CD8-positive, alpha-beta memory T cell (primary cell): ENCODE measurements at regions of chr10 and their contacts with region 1.

Region 1: DNA sequence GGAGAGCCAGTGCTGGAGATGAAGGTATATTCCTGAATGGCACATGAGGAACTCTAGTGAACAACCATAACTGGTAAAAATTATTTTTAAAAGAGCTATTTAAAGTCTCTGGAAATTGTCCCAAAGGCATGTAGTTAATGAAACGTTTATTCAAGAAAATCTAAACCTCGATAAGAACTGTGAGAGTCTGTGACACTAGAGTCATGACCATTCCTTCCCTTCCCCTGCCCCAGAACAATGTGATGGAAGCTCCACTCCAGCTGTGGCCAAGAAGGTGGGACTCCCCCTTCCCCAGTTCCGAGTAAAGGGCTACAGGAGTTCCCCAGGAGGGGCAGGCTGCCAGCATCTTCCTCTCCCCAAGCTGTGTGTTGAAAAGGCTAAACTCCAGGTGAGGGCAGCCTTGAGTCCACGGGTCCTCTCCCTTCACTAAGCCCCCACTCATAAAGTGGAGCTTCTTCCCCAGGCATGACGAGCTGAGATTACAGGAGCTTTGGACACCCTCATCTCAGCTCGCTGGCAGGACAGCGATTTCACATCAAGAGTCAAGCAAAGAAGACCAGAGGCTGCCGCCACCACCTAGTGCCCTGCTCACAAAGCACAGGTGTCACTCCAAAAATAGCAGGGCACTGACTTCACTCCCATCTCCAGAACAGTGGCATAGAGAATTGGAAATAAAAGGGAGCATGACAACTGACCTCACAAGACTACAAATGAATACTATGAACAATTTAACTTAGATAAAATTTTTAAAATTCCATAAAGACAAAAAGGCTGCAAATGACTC is 68.5 kb downstream of the NHLRC2 start:
- DNase-seq: no peak
- H3K4me3 ChIP-seq: no peak overlapping the region
- H3K4me3 Mint-ChIP-seq: no peak overlapping the region
- H3K27ac ChIP-seq: no peak overlapping the region
- H3K27ac Mint-ChIP-seq: no peak overlapping the region
- H3K4me1 ChIP-seq: no peaks in the 10 kb centered on the region
- H3K4me1 Mint-ChIP-seq: no peaks in the 10 kb centered on the region
- H3K27me3 ChIP-seq: no peaks in the 10 kb centered on the region
- H3K27me3 Mint-ChIP-seq: peaks cover 11 to 28% of the 10 kb centered on the region in 2 donors

Region 2: GRCh38 chr10:114541081-114541796 is 618.3 kb after region 1 on chr10:
- CTCF ChIA-PET with region 1: no interaction called
- POLR2A ChIA-PET with region 1: interaction called, 12 read pairs
- DNase-seq: peak; percentile 54 to 92 (median 91)
- H3K4me3 ChIP-seq: peak overlapping the region; percentile 33
- H3K4me3 Mint-ChIP-seq: peak overlapping the region; percentile 50 to 89 (median 75)
- H3K27ac ChIP-seq: peak overlapping the region; percentile 82
- H3K27ac Mint-ChIP-seq: peak overlapping the region; percentile 97 to 100 (median 99)
- H3K4me1 ChIP-seq: peaks cover 96% of the 10 kb centered on the region
- H3K4me1 Mint-ChIP-seq: peaks cover 76 to 95% (median 84%) of the 10 kb centered on the region in 3 donors
- H3K27me3 ChIP-seq: no peaks in the 10 kb centered on the region
- H3K27me3 Mint-ChIP-seq: peaks cover 0 to 2% of the 10 kb centered on the region in 2 donors